ENCODE measurements at regions of chr7 and their contacts with region 1.

Region 1: GRCh38 chr7:127504715-127505114 is 80.7 kb downstream of the GCC1 start:
- DNase-seq: peak in 1 of 5 donors; percentile 36
- H3K4me3 ChIP-seq: no peak overlapping the region
- H3K27ac ChIP-seq: no peak overlapping the region
- H3K4me1 ChIP-seq: no peaks in the 10 kb centered on the region
- H3K27me3 ChIP-seq: no peaks in the 10 kb centered on the region
- CTCF ChIP-seq: no peak
- EP300 ChIP-seq: no peak
- POLR2A ChIP-seq: no peak

Region 2: DNA sequence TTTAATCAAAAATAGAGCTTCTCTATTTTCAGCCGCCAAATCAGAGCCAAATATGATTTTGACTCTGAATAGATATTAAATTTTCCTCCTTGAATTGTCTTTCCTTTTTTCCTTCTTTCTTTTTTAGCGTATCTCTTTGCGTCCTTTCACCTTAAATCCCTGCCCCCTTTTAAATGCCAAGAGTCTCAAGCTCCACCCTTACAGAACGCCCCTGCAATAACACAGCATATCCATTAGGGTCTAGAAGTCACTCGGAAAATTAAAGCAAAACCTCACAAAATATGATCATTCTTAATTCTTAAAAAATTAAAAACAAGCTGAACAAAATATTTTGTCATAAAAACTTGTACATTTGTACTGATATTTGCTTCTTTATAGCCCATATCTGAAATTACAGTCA is 200.6 kb before region 1 on chr7:
- intact Hi-C with region 1: loop called in 1 of 4 experiments (anchors 10 kb)
- DNase-seq: no peak
- H3K4me3 ChIP-seq: no peak overlapping the region
- H3K27ac ChIP-seq: no peak overlapping the region
- H3K4me1 ChIP-seq: no peaks in the 10 kb centered on the region
- H3K27me3 ChIP-seq: no peaks in the 10 kb centered on the region
- CTCF ChIP-seq: no peak
- EP300 ChIP-seq: no peak
- POLR2A ChIP-seq: no peak

Region 3: DNA sequence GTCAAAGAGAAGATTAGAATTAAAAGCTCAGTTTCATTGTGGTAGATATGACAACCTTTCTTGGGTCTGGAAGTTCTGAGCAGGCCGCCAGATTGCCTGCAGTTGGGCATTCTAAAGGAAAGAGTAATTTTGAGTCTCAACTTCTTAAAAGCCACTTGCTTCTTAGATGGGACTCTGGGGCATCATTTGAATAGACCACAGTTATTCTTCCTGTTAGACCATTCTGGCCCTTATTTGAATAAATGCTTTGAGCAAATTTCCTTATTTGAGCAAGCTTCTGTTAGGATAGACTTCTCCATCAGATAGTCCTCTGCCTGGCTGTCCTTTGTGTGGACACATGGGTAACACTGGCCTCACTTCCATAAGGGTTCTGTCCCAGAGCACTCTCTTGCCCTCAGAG is 187.5 kb after region 1 on chr7:
- intact Hi-C with region 1: no loop called
- DNase-seq: no peak
- H3K4me3 ChIP-seq: no peak overlapping the region
- H3K27ac ChIP-seq: no peak overlapping the region
- H3K4me1 ChIP-seq: no peaks in the 10 kb centered on the region
- H3K27me3 ChIP-seq: no peaks in the 10 kb centered on the region
- CTCF ChIP-seq: no peak
- EP300 ChIP-seq: no peak
- POLR2A ChIP-seq: no peak

Measured in ovary (tissue), 10 donors.